AG04449 (cell line): ENCODE measurements at regions of chr3 and their contacts with region 1.

Region 1: DNA sequence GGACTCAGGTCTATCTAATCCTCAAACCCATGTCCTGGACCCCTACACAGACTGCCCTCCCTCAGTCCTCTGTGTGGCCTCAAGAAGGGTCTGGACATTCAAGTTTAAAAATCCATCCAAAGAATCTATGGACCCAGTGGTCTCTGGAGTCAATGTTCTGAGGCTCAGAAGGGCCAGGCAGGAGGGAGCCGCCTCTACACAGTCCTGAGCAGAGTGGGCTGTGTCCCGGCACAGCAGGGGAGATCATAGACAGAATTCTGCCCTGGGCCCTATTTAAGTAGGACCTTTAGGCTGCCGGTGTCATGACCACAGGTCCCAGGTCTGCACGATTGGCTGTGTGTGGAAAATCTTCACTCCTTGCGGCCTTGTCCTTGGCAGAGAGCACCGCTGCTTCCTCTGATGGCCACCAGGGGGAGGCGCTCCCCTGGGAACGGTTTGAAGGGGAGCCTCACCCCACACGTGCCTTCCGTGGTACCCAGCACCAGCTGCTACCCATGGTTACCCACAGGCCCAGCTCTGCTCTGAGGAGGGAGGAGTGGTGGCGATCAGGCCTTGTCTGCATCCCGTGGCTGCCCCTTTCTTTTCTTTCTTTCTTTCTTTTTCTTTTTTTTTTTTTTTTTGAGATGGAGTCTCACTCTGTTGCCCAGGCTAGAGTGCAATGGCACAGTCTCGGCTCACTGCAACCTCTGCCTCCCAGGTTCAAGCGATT is 37.9 kb downstream of the CHRD start:
- DNase-seq: no peak
- H3K4me3 ChIP-seq: no peak overlapping the region
- CTCF ChIP-seq: peak; percentile 99

Region 2: DNA sequence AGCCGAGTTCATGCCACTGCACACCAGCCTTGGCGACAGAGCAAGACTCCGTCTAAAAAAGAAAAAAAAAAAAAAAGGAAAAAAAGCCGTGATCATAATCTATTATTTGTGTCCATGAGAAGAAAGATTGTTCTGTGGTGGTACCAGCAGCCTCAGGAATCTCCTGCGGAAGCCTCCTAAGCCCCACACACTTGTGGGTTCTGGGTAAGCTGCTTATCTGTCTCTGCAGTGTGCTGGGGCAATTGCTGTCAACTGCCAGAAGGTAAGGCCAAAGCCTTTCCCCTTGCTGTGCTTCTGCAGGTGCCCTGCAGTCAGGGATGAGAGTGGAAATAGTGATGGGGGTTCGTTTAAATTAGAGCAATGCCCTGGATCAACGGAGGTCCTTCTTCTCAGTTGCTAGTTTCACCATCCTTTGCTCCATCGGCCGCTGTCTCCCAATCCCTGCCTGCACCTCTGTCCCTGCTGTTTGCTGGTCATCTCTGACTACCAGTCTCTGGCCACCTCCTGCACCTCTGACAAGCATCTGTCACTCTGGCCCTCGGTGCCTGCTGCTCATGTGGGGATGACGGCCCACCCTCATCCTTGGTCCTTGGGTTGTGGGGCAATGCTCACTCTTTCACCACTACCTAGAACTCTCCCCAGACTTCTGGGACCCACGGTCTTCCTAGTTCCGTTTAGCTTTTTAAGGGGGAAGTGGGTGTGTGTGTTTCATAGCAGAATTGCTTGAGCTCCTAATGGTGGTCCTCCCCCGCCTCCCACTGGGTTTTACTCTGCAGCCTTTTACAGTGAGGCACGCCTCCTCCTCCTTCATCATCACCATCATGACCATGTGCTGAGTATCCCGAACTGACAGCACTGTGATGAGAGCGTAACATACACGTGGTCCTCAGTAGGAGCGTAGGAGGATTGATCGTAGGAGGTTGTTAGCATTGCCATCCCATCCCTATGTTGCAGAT is 12.4 kb before region 1 on chr3:
- CTCF ChIA-PET with region 1: interaction called, 14 read pairs
- POLR2A ChIA-PET with region 1: no interaction called
- DNase-seq: no peak
- H3K4me3 ChIP-seq: no peak overlapping the region
- CTCF ChIP-seq: no peak

Region 3: GRCh38 chr3:184428561-184429175 is 10.9 kb after region 1 on chr3:
- CTCF ChIA-PET with region 1: interaction called, 35 read pairs
- POLR2A ChIA-PET with region 1: no interaction called
- DNase-seq: peak; percentile 50
- H3K4me3 ChIP-seq: no peak overlapping the region
- CTCF ChIP-seq: no peak

Region 4: DNA sequence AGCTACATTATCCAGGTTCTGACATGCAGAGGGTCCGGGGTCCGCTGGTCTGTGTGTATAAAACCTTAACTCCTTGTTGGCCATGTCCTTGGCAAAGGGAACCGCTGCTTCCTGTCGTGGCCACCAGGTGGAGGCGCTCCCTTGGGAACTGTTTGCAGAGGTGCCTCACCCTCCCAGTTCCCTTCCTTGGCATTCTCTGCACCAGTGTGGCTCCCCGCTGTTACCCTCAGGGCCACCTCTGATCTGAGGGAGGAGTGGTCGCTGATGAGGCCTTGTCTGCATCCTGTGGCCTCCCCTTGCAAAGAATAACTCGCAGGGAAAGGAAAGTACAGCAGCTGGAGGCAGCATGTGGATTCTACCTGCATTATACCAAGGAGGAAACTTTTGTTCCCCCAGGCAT is 51.6 kb after region 1 on chr3:
- CTCF ChIA-PET with region 1: interaction called, 15 read pairs
- POLR2A ChIA-PET with region 1: no interaction called
- DNase-seq: no peak
- H3K4me3 ChIP-seq: no peak overlapping the region
- CTCF ChIP-seq: peak; percentile 58